ENCODE measurements at regions of chr6 and their contacts with region 1.

Region 1: DNA sequence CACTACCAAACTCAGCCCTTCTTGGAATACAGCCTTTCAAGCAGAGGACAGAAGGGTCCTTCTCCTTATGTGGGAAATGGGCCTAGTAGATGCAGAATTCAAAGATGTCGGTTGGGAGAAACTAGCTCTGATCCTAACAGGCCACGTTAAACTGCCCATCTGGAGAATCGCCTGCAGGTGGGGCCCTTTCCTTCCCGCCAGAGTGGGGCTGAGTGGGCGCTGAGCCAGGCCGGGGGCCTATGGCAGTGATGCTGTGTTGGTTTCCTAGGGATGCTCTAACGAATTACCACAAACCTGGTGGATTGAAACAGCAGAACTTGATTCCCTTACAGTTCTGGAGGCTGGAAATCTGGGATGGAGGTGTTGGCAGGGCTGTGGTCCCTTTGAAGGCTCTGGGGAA is 9.1 kb downstream of the MAPK13 start:
- DNase-seq: peak; percentile 71
- ATAC-seq: peak; percentile 91
- H3K4me3 Mint-ChIP-seq: no peak overlapping the region
- H3K27ac Mint-ChIP-seq: no peak overlapping the region; the same call in 1 of the 2 replicates
- H3K4me1 Mint-ChIP-seq: peaks cover 23% of the 10 kb centered on the region
- H3K27me3 Mint-ChIP-seq: no peaks in the 10 kb centered on the region; the same call in 1 of the 2 replicates
- CTCF ChIP-seq: 0 out of 2 replicates have a peak, but pooled peaks have one; percentile 21

Region 2: DNA sequence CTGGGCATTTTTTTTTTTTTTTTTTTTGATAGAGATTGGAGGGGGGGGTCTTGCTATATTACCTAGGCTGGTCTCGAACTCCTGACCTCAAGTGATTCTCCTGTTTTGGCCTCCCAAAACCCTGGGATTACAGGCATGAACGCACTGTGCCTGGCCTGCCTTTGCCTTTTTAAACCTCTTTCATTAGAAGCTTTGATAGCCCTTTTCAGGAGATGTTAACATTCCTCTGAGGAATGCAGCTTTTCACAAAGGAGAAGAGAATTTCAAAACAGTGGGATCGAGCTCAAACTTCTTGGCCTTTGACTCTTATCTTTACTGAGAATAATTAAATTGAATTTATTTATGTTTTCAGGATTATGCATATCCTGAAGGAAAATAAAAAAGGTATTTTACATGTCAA is 146.3 kb before region 1 on chr6:
- CTCF ChIA-PET with region 1: no interaction called
- POLR2A ChIA-PET with region 1: no interaction called
- DNase-seq: no peak
- ATAC-seq: peak; percentile 50
- H3K4me3 Mint-ChIP-seq: no peak overlapping the region
- H3K27ac Mint-ChIP-seq: no peak overlapping the region
- H3K4me1 Mint-ChIP-seq: peaks cover 5% of the 10 kb centered on the region; the same call in 1 of the 2 replicates
- H3K27me3 Mint-ChIP-seq: no peaks in the 10 kb centered on the region
- CTCF ChIP-seq: no peak

Region 3: DNA sequence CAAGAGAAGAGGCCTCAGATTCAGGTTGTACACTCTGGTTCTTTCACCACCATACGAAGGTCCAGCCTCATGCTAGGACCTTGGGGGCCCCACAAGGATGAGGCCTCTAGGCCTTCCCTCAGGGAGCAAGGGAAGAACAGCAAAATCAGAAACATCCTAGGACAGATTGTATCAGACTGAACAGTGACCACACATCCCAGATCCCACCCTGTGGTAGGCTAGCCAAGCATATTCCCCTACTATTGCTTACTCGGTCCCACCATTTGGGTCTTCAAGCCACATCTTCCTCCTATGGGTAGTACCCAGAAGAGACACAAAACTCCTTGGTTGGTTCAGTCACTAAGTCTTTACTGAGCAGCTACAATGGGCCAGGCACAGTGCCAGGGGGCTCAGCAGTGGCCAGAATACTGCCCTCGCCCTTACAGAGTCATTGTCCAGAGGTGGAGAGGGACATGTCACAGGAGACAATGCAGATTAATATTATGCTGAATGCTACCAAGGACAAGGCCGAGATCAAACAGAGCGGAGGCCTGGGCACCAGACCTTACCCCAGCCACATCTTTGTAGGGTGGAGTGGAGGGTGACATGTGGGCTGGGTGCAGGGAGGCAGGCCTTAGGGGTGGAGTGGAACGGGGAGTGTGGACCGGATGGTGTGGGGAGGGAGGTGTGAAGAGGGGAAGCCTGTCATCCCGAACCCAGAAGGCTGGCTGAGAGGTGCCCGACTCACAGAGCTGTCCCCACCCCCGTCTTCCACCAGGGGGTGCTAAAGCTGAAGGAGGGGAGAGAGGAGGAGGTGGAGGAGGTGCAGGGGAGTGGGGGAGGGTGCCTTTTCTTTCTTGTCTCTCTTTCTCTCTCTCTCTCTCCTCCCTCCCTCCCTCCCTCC is 15.9 kb before region 1 on chr6:
- CTCF ChIA-PET with region 1: interaction called, 12 read pairs
- POLR2A ChIA-PET with region 1: no interaction called
- DNase-seq: peak; percentile 89
- ATAC-seq: peak; percentile 91
- H3K4me3 Mint-ChIP-seq: no peak overlapping the region
- H3K27ac Mint-ChIP-seq: no peak overlapping the region
- H3K4me1 Mint-ChIP-seq: peaks cover 27% of the 10 kb centered on the region
- H3K27me3 Mint-ChIP-seq: no peaks in the 10 kb centered on the region
- CTCF ChIP-seq: peak; percentile 45

Region 4: GRCh38 chr6:36196880-36197548 is 57.6 kb after region 1 on chr6:
- CTCF ChIA-PET with region 1: interaction called, 15 read pairs
- POLR2A ChIA-PET with region 1: no interaction called
- DNase-seq: peak; percentile 100
- ATAC-seq: peak; percentile 95
- H3K4me3 Mint-ChIP-seq: peak overlapping the region; percentile 81
- H3K27ac Mint-ChIP-seq: peak overlapping the region; percentile 64; the same call in 1 of the 2 replicates
- H3K4me1 Mint-ChIP-seq: peaks cover 21% of the 10 kb centered on the region
- H3K27me3 Mint-ChIP-seq: no peaks in the 10 kb centered on the region; the same call in 1 of the 2 replicates
- CTCF ChIP-seq: no peak

Region 5: GRCh38 chr6:36245572-36246061 is 106.2 kb after region 1 on chr6:
- CTCF ChIA-PET with region 1: interaction called, 11 read pairs
- POLR2A ChIA-PET with region 1: no interaction called
- DNase-seq: peak; percentile 62
- ATAC-seq: peak; percentile 78
- H3K4me3 Mint-ChIP-seq: no peak overlapping the region
- H3K27ac Mint-ChIP-seq: peak overlapping the region; percentile 85
- H3K4me1 Mint-ChIP-seq: peaks cover 54% of the 10 kb centered on the region
- H3K27me3 Mint-ChIP-seq: no peaks in the 10 kb centered on the region; the same call in 1 of the 2 replicates
- CTCF ChIP-seq: no peak

Region 6: GRCh38 chr6:36360241-36361054 is 221.0 kb after region 1 on chr6:
- CTCF ChIA-PET with region 1: interaction called, 15 read pairs
- POLR2A ChIA-PET with region 1: no interaction called
- DNase-seq: peak; percentile 77
- ATAC-seq: peak; percentile 96
- H3K4me3 Mint-ChIP-seq: no peak overlapping the region
- H3K27ac Mint-ChIP-seq: no peak overlapping the region
- H3K4me1 Mint-ChIP-seq: no peaks in the 10 kb centered on the region
- H3K27me3 Mint-ChIP-seq: no peaks in the 10 kb centered on the region; the same call in 1 of the 2 replicates
- CTCF ChIP-seq: peak; percentile 67

Measured in WTC11 (cell line).